T-cell (primary cell): ENCODE measurements at regions of chr14 and their contacts with region 1.

Region 1: GRCh38 chr14:20343092-20343861 is at the start of gene PARP2:
- DNase-seq: peak; percentile 71 to 96 (median 82)
- ATAC-seq: peak; percentile 84 to 87 (median 85)
- H3K4me3 ChIP-seq: peak within 1 kb of the TSS; percentile 97 to 98
- H3K4me3 Mint-ChIP-seq: peak within 1 kb of the TSS; percentile 92 to 94 (median 93)
- H3K27ac ChIP-seq: peak within 1 kb of the TSS; percentile 91
- H3K27ac Mint-ChIP-seq: peak within 1 kb of the TSS; percentile 90 to 96
- H3K4me1 ChIP-seq: peaks cover 6 to 7% of the 10 kb centered on the region in 2 experiments
- H3K4me1 Mint-ChIP-seq: peaks cover 14 to 29% (median 17%) of the 10 kb centered on the region in 3 donors
- H3K27me3 ChIP-seq: peaks cover 0 to 4% of the 10 kb centered on the region in 2 experiments
- H3K27me3 Mint-ChIP-seq: no peaks in the 10 kb centered on the region
- total RNA-seq, gene PARP2: 14.6 to 21.8 (median 15.8) TPM

Region 2: GRCh38 chr14:20247646-20248246 is 95.5 kb before region 1 on chr14:
- CTCF ChIA-PET with region 1: no interaction called
- POLR2A ChIA-PET with region 1: no interaction called
- DNase-seq: peak in 1 of 35 experiments; percentile 12
- ATAC-seq: no peak
- H3K4me3 ChIP-seq: no peak overlapping the region
- H3K4me3 Mint-ChIP-seq: no peak overlapping the region
- H3K27ac ChIP-seq: no peak overlapping the region
- H3K27ac Mint-ChIP-seq: no peak overlapping the region
- H3K4me1 ChIP-seq: no peaks in the 10 kb centered on the region
- H3K4me1 Mint-ChIP-seq: no peaks in the 10 kb centered on the region
- H3K27me3 ChIP-seq: peaks cover 0 to 2% of the 10 kb centered on the region in 2 experiments
- H3K27me3 Mint-ChIP-seq: no peaks in the 10 kb centered on the region

Region 3: GRCh38 chr14:20327005-20327869 is 16.0 kb before region 1 on chr14:
- CTCF ChIA-PET with region 1: interaction called, 35 to 159 read pairs
- POLR2A ChIA-PET with region 1: interaction called, 19 to 64 read pairs
- DNase-seq: peak in 8 of 35 experiments; percentile 9 to 84 (median 31)
- ATAC-seq: peak; percentile 46 to 72 (median 60)
- H3K4me3 ChIP-seq: no peak overlapping the region
- H3K4me3 Mint-ChIP-seq: peak overlapping the region in 1 of 3 donors; percentile 13
- H3K27ac ChIP-seq: no peak overlapping the region
- H3K27ac Mint-ChIP-seq: peak overlapping the region; percentile 70 to 79
- H3K4me1 ChIP-seq: peaks cover 0 to under 1% of the 10 kb centered on the region in 2 experiments
- H3K4me1 Mint-ChIP-seq: peaks cover 19 to 29% (median 24%) of the 10 kb centered on the region in 3 donors
- H3K27me3 ChIP-seq: no peaks in the 10 kb centered on the region
- H3K27me3 Mint-ChIP-seq: no peaks in the 10 kb centered on the region

Region 4: GRCh38 chr14:20356422-20356821 is 13.1 kb after region 1 on chr14:
- CTCF ChIA-PET with region 1: interaction called in 1 of 2 experiments, 3 read pairs
- POLR2A ChIA-PET with region 1: interaction called, 7 to 11 read pairs
- DNase-seq: no peak
- ATAC-seq: no peak
- H3K4me3 ChIP-seq: no peak overlapping the region
- H3K4me3 Mint-ChIP-seq: no peak overlapping the region
- H3K27ac ChIP-seq: no peak overlapping the region
- H3K27ac Mint-ChIP-seq: peak overlapping the region in 1 of 2 donors; percentile 7
- H3K4me1 ChIP-seq: no peaks in the 10 kb centered on the region
- H3K4me1 Mint-ChIP-seq: no peaks in the 10 kb centered on the region
- H3K27me3 ChIP-seq: no peaks in the 10 kb centered on the region
- H3K27me3 Mint-ChIP-seq: no peaks in the 10 kb centered on the region

Region 5: DNA sequence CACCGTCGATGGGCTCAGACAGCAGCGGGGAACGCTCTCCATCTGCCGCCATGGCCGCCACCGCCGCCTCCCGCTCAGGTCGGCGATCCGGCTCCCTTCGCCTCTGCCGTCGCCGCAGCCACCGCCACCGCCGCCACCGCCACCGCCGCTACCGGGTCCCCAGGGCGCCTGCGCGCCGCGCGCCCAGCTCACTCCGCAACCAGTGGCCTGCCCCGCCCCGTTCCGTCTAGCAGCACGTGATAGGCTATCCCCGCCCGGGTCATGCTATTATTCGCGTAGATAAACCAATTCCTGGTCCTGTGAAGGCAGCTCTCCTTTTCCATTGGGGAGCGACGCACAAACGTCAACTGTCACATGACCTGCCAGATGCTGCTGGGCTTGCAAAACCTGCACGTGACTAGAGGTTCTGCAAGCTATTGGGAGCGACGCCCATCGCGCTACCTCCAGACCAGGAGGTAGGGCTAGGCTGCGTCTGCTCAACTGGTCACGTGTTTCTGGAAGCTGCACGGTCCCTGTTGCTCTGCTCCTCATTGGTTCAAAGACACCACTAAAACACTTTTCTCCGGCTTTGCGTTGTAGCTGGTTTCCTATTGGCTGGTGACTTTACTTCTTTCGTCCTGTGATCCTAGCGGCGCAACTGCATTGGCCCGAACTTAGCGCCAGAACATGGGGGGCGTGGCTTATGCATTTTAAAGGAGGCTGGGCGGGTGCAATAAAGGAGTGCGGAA is 118.2 kb after region 1 on chr14 and contains the start of gene PIP4P1:
- CTCF ChIA-PET with region 1: interaction called in 1 of 2 experiments, 14 read pairs
- POLR2A ChIA-PET with region 1: interaction called, 3 to 17 read pairs
- DNase-seq: peak; percentile 91 to 100 (median 98)
- ATAC-seq: peak; percentile 88 to 92 (median 90)
- H3K4me3 ChIP-seq: peak within 1 kb of the TSS; percentile 68 to 76
- H3K4me3 Mint-ChIP-seq: peak within 1 kb of the TSS; percentile 84 to 92 (median 88)
- H3K27ac ChIP-seq: peak within 1 kb of the TSS; percentile 90
- H3K27ac Mint-ChIP-seq: peak within 1 kb of the TSS; percentile 94
- H3K4me1 ChIP-seq: peaks cover 11 to 27% of the 10 kb centered on the region in 2 experiments
- H3K4me1 Mint-ChIP-seq: peaks cover 24 to 40% (median 31%) of the 10 kb centered on the region in 3 donors
- H3K27me3 ChIP-seq: no peaks in the 10 kb centered on the region
- H3K27me3 Mint-ChIP-seq: no peaks in the 10 kb centered on the region
- total RNA-seq, gene PIP4P1: 54.2 to 72.8 (median 57.5) TPM

Region 6: DNA sequence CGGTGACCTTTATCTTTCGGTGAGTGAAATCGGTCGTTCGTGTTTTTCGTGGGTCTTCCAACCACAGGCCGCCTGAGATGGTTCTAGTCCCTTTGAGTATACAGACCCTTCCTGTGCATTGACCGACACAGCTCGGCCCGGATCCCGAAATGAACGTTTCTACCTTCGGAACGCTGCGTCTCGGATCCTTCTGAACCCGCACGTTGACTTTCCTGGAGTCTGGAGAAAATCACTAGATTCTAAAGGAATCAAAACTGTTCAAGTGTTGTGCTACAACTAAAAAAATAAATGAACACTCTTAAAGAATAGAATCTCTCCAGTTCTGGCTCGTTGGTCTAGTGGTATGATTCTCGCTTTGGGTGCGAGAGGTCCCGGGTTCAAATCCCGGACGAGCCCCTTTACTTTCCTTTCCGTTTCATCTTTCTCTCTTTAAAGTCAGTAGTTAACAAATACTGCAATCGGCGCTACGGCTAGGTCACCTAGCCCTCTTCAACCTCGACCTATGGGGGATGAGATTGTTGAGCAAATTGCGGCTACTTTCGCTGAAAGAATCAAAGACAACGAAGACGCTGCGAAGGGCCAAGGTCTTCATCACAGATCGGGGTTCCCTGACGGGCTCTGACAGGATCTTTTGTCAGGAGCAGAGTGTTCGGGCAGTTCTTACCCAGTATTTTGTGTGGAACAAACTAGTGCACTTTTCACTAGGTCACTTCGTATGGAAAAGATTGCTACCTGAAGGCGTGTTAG is 289.6 kb after region 1 on chr14:
- CTCF ChIA-PET with region 1: no interaction called
- POLR2A ChIA-PET with region 1: interaction called in 1 of 2 experiments, 20 read pairs
- DNase-seq: peak in 25 of 35 experiments; percentile 34 to 77 (median 53)
- ATAC-seq: peak; percentile 36 to 57 (median 48)
- H3K4me3 ChIP-seq: peak overlapping the region; percentile 45 to 70
- H3K4me3 Mint-ChIP-seq: peak overlapping the region; percentile 75 to 79 (median 79)
- H3K27ac ChIP-seq: peak overlapping the region; percentile 28
- H3K27ac Mint-ChIP-seq: peak overlapping the region; percentile 65 to 75
- H3K4me1 ChIP-seq: peaks cover 12 to 38% of the 10 kb centered on the region in 2 experiments
- H3K4me1 Mint-ChIP-seq: peaks cover 40 to 54% (median 48%) of the 10 kb centered on the region in 3 donors
- H3K27me3 ChIP-seq: peaks cover 16 to 26% of the 10 kb centered on the region in 2 experiments
- H3K27me3 Mint-ChIP-seq: peaks cover 11 to 49% of the 10 kb centered on the region in 2 donors